Psoas muscle (tissue), 8 donors: ENCODE measurements at regions of chr9 and their contacts with region 1.

Region 1: GRCh38 chr9:136122425-136123383 is 4.0 kb upstream of the TMEM250 start:
- DNase-seq: peak; percentile 83 to 90
- ATAC-seq: peak; percentile 40 to 65 (median 48)
- H3K4me3 ChIP-seq: peak overlapping the region; percentile 54
- H3K27ac ChIP-seq: peak overlapping the region; percentile 58
- H3K4me1 ChIP-seq: peaks cover 19% of the 10 kb centered on the region
- H3K27me3 ChIP-seq: no peaks in the 10 kb centered on the region
- CTCF ChIP-seq: peak; percentile 97

Region 2: DNA sequence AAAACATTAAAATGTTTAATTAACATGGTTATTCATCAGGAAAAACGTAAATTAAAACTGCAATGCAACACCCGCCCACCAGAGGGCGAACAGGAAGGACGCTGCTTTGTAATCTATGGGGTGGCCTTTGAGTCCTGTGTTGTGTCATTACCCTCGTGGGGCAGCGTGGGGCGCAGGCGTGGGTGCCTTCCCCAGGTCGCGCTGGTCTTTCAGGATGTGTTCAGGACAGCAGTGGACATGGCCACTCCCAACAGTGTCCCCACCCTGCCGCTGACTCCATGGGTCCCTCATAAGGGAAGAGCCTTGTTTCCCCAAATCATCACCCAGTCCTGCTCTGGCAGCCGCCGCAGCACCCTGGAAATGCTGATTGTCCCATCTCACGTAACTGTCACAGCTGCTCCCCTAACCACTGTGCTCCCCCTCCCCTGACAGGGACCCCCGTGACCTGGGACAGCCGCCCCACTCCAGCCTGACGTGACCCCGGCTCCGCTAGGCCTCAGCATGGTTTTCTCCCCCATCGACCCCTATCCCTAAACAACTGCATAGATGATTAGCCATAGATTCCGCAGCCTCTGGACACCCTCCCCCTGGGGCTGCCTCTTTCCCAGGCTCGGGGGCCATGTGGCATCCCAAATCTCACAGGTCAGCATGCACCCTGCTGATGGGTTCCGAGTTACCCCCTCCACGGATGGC is 519.8 kb before region 1 on chr9:
- intact Hi-C with region 1: loop called in 1 of 2 experiments (anchors 10 kb)
- DNase-seq: peak in 1 of 2 donors; percentile 48
- ATAC-seq: peak in 2 of 4 donors; percentile 44 to 46
- H3K4me3 ChIP-seq: no peak overlapping the region
- H3K27ac ChIP-seq: no peak overlapping the region
- H3K4me1 ChIP-seq: no peaks in the 10 kb centered on the region
- H3K27me3 ChIP-seq: peaks cover 0 to 36% (median 0%) of the 10 kb centered on the region in 3 donors
- CTCF ChIP-seq: peak; percentile 63

Region 3: DNA sequence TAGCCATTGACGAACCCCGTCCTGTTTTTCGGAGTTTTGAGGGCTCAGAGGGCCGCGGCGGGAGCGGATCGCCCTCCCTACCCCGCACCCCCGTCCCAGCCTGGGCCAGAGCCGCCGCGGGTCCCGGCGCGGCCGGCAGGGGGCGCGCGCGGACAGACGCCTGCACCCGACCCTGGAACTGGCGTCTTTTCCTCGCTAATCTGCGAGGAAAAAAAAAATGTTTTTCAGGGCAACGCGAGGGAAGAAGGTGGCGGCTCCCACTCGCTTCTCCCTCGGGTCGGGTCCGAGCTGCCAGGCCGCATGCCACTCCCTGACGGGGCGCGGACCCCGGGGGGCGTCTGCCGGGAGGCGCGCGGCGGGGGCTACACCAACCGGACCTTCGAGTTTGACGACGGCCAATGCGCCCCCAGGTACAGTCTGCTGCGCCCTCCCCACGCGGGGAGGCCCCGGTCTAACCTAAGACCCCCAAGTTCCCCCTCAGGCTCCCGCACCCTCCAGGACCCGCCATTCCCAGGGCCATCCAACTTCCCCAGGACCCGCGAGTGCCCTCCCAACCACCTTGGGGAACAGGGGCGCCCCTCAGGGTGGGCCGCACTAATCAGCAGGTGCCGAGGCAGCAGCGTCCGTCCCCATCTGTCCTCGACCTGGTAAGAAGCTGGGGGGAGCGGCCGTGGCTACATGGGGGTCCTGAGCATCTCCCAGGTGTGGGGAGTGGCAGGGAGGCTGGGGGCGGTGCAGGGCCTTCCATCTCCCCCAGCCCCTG is 420.6 kb before region 1 on chr9 and contains the start of gene KCNT1:
- intact Hi-C with region 1: loop called in 1 of 2 experiments (anchors 5 kb)
- DNase-seq: peak; percentile 51 to 70
- ATAC-seq: peak; percentile 62 to 87 (median 76)
- H3K4me3 ChIP-seq: peak within 1 kb of the TSS; percentile 50
- H3K27ac ChIP-seq: no peak within 1 kb of the TSS
- H3K4me1 ChIP-seq: peaks cover 6% of the 10 kb centered on the region
- H3K27me3 ChIP-seq: peaks cover 0 to 11% (median 5%) of the 10 kb centered on the region in 3 donors
- CTCF ChIP-seq: peak; percentile 93
- total RNA-seq, gene KCNT1: 10.3 to 15.0 (median 12.4) TPM

Region 4: GRCh38 chr9:135797507-135798262 is 325.0 kb before region 1 on chr9:
- intact Hi-C with region 1: loop called in 1 of 2 experiments (anchors 10 kb)
- DNase-seq: peak; percentile 51 to 78
- ATAC-seq: peak; percentile 63 to 84 (median 72)
- H3K4me3 ChIP-seq: no peak overlapping the region
- H3K27ac ChIP-seq: no peak overlapping the region
- H3K4me1 ChIP-seq: peaks cover 11% of the 10 kb centered on the region
- H3K27me3 ChIP-seq: peaks cover 0 to 19% (median 1%) of the 10 kb centered on the region in 3 donors
- CTCF ChIP-seq: peak; percentile 56

Region 5: DNA sequence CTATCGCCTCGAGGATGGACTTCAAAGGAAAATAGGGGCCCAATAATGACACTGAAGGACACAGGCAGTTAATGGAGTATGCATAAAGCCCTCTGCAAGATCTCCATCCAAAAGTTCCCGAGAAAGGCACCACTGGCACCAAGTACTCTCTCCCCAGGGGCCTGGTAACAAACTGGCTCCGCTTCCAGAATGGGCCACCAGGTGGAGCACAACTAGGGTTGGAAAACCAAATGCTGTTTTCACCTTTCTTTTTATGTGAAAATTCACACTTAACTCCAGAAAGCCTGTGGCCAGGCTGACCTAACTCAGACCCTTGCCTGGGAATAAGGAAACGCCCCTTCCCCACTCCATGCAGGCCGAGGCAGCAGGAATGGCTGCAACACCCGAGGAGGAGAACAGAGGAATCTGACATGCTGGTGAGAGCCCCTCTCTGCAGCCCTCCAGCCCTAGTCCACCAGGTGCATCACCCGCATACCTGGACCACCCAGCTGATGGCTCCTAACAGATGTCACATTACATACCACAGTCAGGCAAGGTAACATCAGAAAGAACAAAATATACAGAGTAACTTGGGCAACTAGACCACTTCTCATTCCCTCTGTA is 258.2 kb before region 1 on chr9:
- intact Hi-C with region 1: loop called (anchors 1 kb)
- DNase-seq: peak; percentile 64 to 79
- ATAC-seq: peak in 3 of 4 donors; percentile 64 to 80 (median 66)
- H3K4me3 ChIP-seq: no peak overlapping the region
- H3K27ac ChIP-seq: no peak overlapping the region
- H3K4me1 ChIP-seq: peaks cover 4% of the 10 kb centered on the region
- H3K27me3 ChIP-seq: no peaks in the 10 kb centered on the region
- CTCF ChIP-seq: peak; percentile 81

Region 6: DNA sequence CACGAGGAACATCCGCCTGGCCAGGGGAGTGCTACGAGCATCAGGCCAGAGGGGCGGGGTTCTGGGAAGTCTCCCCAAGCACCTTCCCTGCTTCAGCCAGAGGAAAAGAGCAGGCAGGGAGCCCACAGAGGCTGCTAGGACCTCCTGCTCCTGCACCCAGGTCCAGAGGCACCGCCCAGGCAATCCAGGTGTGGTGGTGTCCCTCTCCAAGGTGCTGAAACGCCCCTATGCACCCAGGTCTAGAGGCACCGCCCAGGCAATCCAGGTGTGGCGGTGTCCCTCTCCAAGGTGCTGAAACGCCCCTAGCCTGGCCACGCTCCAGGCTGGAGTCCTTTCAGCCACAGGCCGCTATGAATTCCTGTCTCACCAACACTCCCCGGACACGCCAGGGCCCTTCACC is 150.8 kb before region 1 on chr9:
- intact Hi-C with region 1: loop called (anchors 1 to 2 kb)
- DNase-seq: no peak
- ATAC-seq: peak in 2 of 4 donors; percentile 28 to 36
- H3K4me3 ChIP-seq: no peak overlapping the region
- H3K27ac ChIP-seq: no peak overlapping the region
- H3K4me1 ChIP-seq: peaks cover 4% of the 10 kb centered on the region
- H3K27me3 ChIP-seq: no peaks in the 10 kb centered on the region
- CTCF ChIP-seq: no peak

Region 7: GRCh38 chr9:136089697-136090045 is 33.0 kb before region 1 on chr9:
- intact Hi-C with region 1: loop called (anchors 5 kb)
- DNase-seq: no peak
- ATAC-seq: no peak
- H3K4me3 ChIP-seq: peak overlapping the region; percentile 52
- H3K27ac ChIP-seq: peak overlapping the region; percentile 93
- H3K4me1 ChIP-seq: peaks cover 81% of the 10 kb centered on the region
- H3K27me3 ChIP-seq: no peaks in the 10 kb centered on the region
- CTCF ChIP-seq: peak; percentile 26